Aorta (tissue), 5 donors: ENCODE measurements at regions of chr22 and their contacts with region 1.

Region 1: GRCh38 chr22:30094804-30095203 is 14.5 kb downstream of the HORMAD2 start:
- DNase-seq: no peak
- ATAC-seq: no peak
- H3K4me3 ChIP-seq: no peak overlapping the region
- H3K27ac ChIP-seq: no peak overlapping the region
- H3K4me1 ChIP-seq: no peaks in the 10 kb centered on the region
- H3K27me3 ChIP-seq: no peaks in the 10 kb centered on the region

Region 2: DNA sequence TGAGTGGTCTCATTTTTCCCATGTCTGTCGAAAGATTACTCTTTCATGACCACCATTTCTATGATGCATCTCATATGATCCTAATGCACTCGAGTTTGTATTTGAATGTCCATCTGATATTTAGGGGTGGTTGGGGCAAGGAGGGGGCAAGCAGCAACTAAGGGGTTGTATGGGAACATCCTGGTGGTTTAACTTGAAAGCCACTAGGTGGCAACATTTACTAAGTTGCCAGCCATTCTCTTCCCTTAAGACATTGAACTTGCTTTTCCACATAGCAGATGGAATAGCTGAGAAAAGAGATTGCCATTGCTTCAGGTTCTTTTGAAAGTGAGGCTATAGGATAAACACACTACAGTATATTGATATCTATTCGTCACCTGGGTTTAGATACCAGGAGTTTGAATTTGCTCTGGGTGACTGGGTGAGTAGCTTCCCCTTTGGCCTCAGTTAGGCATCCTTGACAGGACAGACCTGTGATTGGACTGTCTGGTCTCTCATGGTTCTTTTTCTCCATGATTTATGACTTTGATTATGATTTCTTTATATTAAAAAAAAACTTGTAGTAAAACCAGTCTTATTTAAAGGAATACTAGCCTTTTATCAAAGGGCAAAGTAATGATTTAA is 459.0 kb before region 1 on chr22:
- intact Hi-C with region 1: loop called in 1 of 2 experiments (anchors 10 kb)
- DNase-seq: no peak
- ATAC-seq: no peak
- H3K4me3 ChIP-seq: no peak overlapping the region
- H3K27ac ChIP-seq: no peak overlapping the region
- H3K4me1 ChIP-seq: no peaks in the 10 kb centered on the region
- H3K27me3 ChIP-seq: no peaks in the 10 kb centered on the region

Region 3: GRCh38 chr22:29979777-29980321 is 115.0 kb before region 1 on chr22:
- intact Hi-C with region 1: no loop called
- DNase-seq: no peak
- ATAC-seq: no peak
- H3K4me3 ChIP-seq: no peak overlapping the region
- H3K27ac ChIP-seq: no peak overlapping the region
- H3K4me1 ChIP-seq: no peaks in the 10 kb centered on the region
- H3K27me3 ChIP-seq: no peaks in the 10 kb centered on the region